ENCODE measurements at regions of chr6 and their contacts with region 1.

Region 1: GRCh38 chr6:227074-227782 is 65.1 kb upstream of the DUSP22 start:
- DNase-seq: no peak
- H3K4me3 Mint-ChIP-seq: no peak overlapping the region
- H3K27ac Mint-ChIP-seq: peak overlapping the region; percentile 58
- H3K4me1 Mint-ChIP-seq: peaks cover 61% of the 10 kb centered on the region
- H3K27me3 Mint-ChIP-seq: no peaks in the 10 kb centered on the region

Region 2: GRCh38 chr6:152431-152830 is 74.8 kb before region 1 on chr6:
- intact Hi-C with region 1: no loop called
- DNase-seq: peak; percentile 19
- H3K4me3 Mint-ChIP-seq: no peak overlapping the region
- H3K27ac Mint-ChIP-seq: no peak overlapping the region
- H3K4me1 Mint-ChIP-seq: peaks cover 37% of the 10 kb centered on the region
- H3K27me3 Mint-ChIP-seq: peaks cover 33% of the 10 kb centered on the region

Region 3: GRCh38 chr6:168865-169455 is 58.3 kb before region 1 on chr6:
- intact Hi-C with region 1: no loop called
- DNase-seq: no peak
- H3K4me3 Mint-ChIP-seq: no peak overlapping the region
- H3K27ac Mint-ChIP-seq: no peak overlapping the region
- H3K4me1 Mint-ChIP-seq: peaks cover 2% of the 10 kb centered on the region
- H3K27me3 Mint-ChIP-seq: peaks cover 27% of the 10 kb centered on the region

Region 4: DNA sequence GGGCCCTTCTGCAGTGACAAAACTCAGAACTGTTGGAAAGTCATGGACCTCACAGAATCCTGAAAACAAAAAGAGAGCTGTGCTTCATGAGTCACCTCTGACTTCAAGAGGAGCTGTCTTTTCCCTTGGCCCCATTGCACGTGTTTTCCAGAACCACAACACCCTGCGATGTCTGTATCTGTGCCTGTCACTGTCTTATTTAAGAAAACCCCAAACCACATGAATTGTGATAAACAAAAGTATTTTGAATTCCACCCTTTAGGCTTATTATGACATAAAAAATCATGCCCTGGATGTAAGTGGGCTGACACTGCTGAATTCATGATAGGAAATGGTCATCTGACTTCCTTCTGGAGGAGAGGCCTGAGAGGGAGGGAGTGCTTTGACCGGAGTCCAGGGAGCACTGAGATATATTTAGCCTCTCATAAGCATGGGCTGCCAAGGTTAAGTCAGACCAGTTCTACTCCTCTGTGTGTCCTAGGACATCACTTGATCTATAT is 31.3 kb before region 1 on chr6:
- intact Hi-C with region 1: loop called (anchors 1 kb)
- DNase-seq: peak; percentile 85
- H3K4me3 Mint-ChIP-seq: peak overlapping the region; percentile 21
- H3K27ac Mint-ChIP-seq: peak overlapping the region; percentile 74
- H3K4me1 Mint-ChIP-seq: peaks cover 44% of the 10 kb centered on the region
- H3K27me3 Mint-ChIP-seq: peaks cover 2% of the 10 kb centered on the region

Region 5: DNA sequence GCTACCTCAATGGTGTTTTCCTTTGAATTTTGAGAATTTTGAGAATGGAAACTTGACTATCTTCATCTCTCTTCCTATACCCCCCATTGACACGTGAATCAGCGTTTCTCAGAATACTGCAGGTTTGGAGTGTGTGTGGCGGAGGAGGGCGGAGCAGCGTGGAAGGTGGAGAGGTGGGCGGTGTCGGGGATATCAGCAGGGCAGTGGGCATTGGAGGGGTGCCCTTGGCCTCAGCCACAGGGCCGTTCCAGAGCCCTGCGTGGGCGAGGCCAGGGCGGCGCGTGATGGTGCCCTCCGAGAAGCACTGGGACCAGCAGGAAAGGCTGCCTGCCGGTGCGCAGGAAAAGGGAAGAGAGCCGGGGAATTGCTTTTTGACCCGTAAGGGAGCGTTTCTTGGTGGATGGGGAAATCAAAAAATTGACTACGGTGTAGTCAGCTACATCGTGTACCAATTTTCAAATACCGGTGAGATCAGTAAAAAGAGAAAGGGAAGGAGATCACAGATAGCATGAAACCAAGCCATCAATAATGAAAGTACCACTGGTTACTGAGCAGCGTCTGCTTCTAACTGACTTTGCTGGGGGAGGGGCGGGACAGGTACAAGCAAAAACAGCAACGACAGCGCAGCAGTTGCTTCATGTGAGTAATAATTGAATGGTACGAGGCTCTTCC is 17.7 kb before region 1 on chr6:
- intact Hi-C with region 1: loop called (anchors 2 kb)
- DNase-seq: peak; percentile 82
- H3K4me3 Mint-ChIP-seq: peak overlapping the region; percentile 69
- H3K27ac Mint-ChIP-seq: peak overlapping the region; percentile 56
- H3K4me1 Mint-ChIP-seq: peaks cover 27% of the 10 kb centered on the region
- H3K27me3 Mint-ChIP-seq: peaks cover 12% of the 10 kb centered on the region

Region 6: GRCh38 chr6:336159-337019 is 109.2 kb after region 1 on chr6:
- intact Hi-C with region 1: loop called (anchors 2 kb)
- DNase-seq: peak; percentile 71
- H3K4me3 Mint-ChIP-seq: peak overlapping the region; percentile 65
- H3K27ac Mint-ChIP-seq: peak overlapping the region; percentile 75
- H3K4me1 Mint-ChIP-seq: peaks cover 45% of the 10 kb centered on the region
- H3K27me3 Mint-ChIP-seq: no peaks in the 10 kb centered on the region

Region 7: DNA sequence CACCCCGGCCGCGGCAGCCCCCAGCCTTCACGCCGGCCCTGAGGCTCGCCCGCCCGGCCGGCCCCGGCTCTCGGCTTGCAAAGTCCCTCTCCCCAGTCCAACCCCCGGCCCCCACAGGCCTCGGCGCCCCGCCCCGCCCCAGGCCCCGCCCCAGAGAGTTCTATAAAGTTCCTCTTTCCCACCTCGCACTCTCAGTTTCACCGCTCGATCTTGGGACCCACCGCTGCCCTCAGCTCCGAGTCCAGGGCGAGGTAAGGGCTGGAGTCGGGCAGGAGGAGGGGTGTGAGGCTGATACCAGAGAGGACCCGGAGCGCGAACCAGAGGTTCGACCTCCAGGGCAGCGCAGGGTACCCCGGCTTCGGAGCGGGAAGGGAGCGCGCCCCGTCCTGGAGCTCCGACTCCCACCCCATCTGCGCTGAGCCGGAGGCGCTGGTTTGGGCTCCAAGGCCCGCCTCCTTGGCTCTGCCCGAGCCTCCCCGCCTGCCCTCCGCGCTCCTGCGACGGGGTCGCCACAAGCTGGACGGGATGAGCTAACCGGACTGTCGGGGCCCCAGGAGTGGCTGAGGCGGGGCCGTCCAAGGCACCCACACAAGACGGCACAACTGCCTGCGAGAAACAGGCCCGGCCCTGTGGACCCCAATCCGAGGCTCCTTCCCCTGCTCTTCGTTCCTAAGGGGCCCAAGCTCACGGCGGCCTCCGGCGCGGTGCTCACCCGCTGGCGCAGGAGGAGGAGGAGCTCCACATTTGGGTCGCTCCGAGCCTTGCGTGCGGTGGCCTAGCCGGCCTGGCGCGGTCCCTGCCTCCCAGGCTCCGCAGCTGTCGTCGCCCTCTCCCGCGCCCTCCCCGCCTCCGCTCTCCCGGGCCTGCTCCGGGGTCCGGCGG is 164.6 kb after region 1 on chr6 and contains the start of gene IRF4:
- intact Hi-C with region 1: loop called (anchors 1 kb)
- DNase-seq: peak; percentile 92
- H3K4me3 Mint-ChIP-seq: peak within 1 kb of the TSS; percentile 93
- H3K27ac Mint-ChIP-seq: peak within 1 kb of the TSS; percentile 98
- H3K4me1 Mint-ChIP-seq: peaks cover 40% of the 10 kb centered on the region
- H3K27me3 Mint-ChIP-seq: peaks cover 2% of the 10 kb centered on the region
- total RNA-seq, gene IRF4: 831 and 846 TPM in 2 replicates

Region 8: DNA sequence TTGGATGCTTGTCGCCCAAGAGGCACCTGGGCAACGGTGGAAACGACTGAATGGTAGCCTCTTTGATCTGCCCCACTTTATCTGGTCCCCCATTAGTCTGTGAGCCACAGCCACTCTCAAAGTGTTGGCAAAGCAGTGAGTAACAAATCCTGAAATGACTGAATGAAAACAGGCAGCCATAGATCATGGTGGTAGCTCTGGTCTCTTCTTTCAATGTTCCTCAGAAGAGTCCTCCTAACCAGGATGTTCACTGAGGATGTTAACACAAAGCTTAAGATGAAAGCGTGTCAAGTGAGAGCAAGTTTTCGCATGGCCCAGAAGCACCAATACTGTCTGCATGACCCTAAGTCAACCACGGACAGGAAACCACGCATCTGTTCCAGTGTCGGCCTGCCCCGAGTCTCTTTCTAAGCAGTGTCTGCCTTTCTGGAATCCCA is 271.6 kb after region 1 on chr6:
- intact Hi-C with region 1: loop called (anchors 2 kb)
- DNase-seq: peak; percentile 88
- H3K4me3 Mint-ChIP-seq: peak overlapping the region; percentile 78
- H3K27ac Mint-ChIP-seq: peak overlapping the region; percentile 92
- H3K4me1 Mint-ChIP-seq: peaks cover 73% of the 10 kb centered on the region
- H3K27me3 Mint-ChIP-seq: no peaks in the 10 kb centered on the region

Measured in activated CD4-positive, alpha-beta T cell treated with anti-CD3 and anti-CD28 coated beads, Interleukin-2, amount 10 ng/mL, durations not matched to agents 24 days and 14 days (primary cell).